ENCODE measurements at regions of chr12 and their contacts with region 1.

Region 1: DNA sequence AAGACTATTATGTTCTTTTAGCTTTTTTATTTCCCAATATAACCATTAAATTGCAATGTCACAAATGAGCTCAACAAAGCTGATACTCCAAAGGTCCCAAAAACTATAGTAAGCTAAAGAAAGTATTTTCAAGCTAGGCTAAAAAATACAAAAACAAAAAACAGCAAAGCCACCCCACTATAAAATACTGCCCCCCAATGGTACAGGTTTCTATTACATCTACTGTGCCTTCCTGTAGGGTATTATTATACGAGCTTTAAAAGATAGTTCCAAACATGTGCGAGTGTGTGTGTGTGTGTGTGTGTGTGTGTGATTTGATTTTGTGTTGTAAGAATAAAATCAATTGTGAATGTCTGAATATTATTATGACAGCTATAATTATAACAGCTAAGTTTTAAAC is 1.1 kb downstream of the IFNG start:
- DNase-seq: peak in 6 of 35 experiments; percentile 3 to 72 (median 14)
- ATAC-seq: peak in 2 of 4 experiments; percentile 43 to 47
- H3K4me3 ChIP-seq: peak overlapping the region in 1 of 2 donors; percentile 30
- H3K4me3 Mint-ChIP-seq: peak overlapping the region in 1 of 3 donors; percentile 58
- H3K27ac ChIP-seq: no peak overlapping the region
- H3K27ac Mint-ChIP-seq: no peak overlapping the region
- H3K4me1 ChIP-seq: peaks cover 0 to 4% of the 10 kb centered on the region in 2 experiments
- H3K4me1 Mint-ChIP-seq: peaks cover 10 to 40% (median 37%) of the 10 kb centered on the region in 3 donors
- H3K27me3 ChIP-seq: no peaks in the 10 kb centered on the region
- H3K27me3 Mint-ChIP-seq: no peaks in the 10 kb centered on the region

Region 2: DNA sequence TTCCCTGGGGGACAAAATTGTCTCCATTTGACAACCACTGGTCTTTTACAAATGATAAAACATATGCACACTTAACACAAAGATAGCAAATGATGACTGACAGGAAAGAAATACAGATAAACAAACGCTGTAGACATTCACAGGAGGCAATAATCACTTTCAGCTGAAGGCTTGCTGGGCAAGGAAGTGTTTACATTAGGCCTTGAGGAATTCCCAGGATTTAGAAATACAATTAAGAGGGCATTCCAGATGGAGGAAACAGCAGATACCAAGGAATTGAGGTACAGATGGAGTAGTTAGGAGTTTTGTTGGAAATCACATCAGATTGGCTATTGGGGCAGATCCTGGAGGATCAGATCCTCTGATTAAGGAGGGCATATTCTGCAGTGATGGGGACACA is 416.0 kb before region 1 on chr12:
- CTCF ChIA-PET with region 1: no interaction called
- POLR2A ChIA-PET with region 1: no interaction called
- DNase-seq: no peak
- ATAC-seq: no peak
- H3K4me3 ChIP-seq: no peak overlapping the region
- H3K4me3 Mint-ChIP-seq: no peak overlapping the region
- H3K27ac ChIP-seq: no peak overlapping the region
- H3K27ac Mint-ChIP-seq: no peak overlapping the region
- H3K4me1 ChIP-seq: no peaks in the 10 kb centered on the region
- H3K4me1 Mint-ChIP-seq: no peaks in the 10 kb centered on the region
- H3K27me3 ChIP-seq: no peaks in the 10 kb centered on the region
- H3K27me3 Mint-ChIP-seq: no peaks in the 10 kb centered on the region

Region 3: GRCh38 chr12:68040450-68041075 is 117.9 kb before region 1 on chr12:
- CTCF ChIA-PET with region 1: interaction called, 7 to 26 read pairs
- POLR2A ChIA-PET with region 1: interaction called in 1 of 2 experiments, 3 read pairs
- DNase-seq: peak in 34 of 35 experiments; percentile 8 to 85 (median 52)
- ATAC-seq: peak; percentile 66 to 85 (median 80)
- H3K4me3 ChIP-seq: no peak overlapping the region
- H3K4me3 Mint-ChIP-seq: no peak overlapping the region
- H3K27ac ChIP-seq: no peak overlapping the region
- H3K27ac Mint-ChIP-seq: no peak overlapping the region
- H3K4me1 ChIP-seq: peaks cover 0 to 10% of the 10 kb centered on the region in 2 experiments
- H3K4me1 Mint-ChIP-seq: peaks cover 6 to 17% (median 13%) of the 10 kb centered on the region in 3 donors
- H3K27me3 ChIP-seq: no peaks in the 10 kb centered on the region
- H3K27me3 Mint-ChIP-seq: no peaks in the 10 kb centered on the region

Region 4: DNA sequence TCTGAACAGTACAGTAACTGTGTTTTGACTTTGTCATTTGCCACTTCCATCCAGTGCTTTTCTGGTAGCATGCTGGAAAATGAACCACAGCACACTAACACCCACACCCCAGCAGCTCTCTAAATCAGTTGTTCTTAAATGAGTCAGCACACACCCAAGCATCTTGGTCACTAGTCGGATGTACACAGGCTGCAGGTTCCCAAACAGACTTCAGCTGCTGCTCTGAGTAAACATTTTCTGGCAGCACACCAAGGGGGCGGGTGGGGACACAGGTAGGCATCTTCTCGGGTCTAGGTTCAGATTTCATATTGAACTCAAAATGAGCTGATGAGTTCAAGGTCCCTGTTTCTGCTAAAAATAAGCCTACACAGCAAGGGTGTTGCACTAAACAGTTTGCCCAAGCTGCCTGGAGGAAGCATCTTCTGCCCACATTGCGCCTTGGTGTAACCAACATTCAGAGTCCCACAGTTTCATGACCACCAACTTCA is 38.7 kb before region 1 on chr12:
- CTCF ChIA-PET with region 1: interaction called in 1 of 2 experiments, 41 read pairs
- POLR2A ChIA-PET with region 1: no interaction called
- DNase-seq: peak in 30 of 35 experiments; percentile 5 to 56 (median 18)
- ATAC-seq: peak; percentile 49 to 79 (median 56)
- H3K4me3 ChIP-seq: no peak overlapping the region
- H3K4me3 Mint-ChIP-seq: no peak overlapping the region
- H3K27ac ChIP-seq: peak overlapping the region; percentile 55
- H3K27ac Mint-ChIP-seq: peak overlapping the region; percentile 47 to 71
- H3K4me1 ChIP-seq: peaks cover 10 to 31% of the 10 kb centered on the region in 2 experiments
- H3K4me1 Mint-ChIP-seq: peaks cover 22 to 36% (median 24%) of the 10 kb centered on the region in 3 donors
- H3K27me3 ChIP-seq: no peaks in the 10 kb centered on the region
- H3K27me3 Mint-ChIP-seq: no peaks in the 10 kb centered on the region

Region 5: GRCh38 chr12:68175557-68176061 is 17.2 kb after region 1 on chr12:
- CTCF ChIA-PET with region 1: interaction called, 4 to 19 read pairs
- POLR2A ChIA-PET with region 1: interaction called in 1 of 2 experiments, 4 read pairs
- DNase-seq: peak; percentile 40 to 89 (median 68)
- ATAC-seq: peak; percentile 89 to 93 (median 92)
- H3K4me3 ChIP-seq: peak overlapping the region in 1 of 2 donors; percentile 39
- H3K4me3 Mint-ChIP-seq: peak overlapping the region; percentile 60 to 71 (median 67)
- H3K27ac ChIP-seq: peak overlapping the region; percentile 94
- H3K27ac Mint-ChIP-seq: peak overlapping the region; percentile 89 to 91
- H3K4me1 ChIP-seq: peaks cover 37 to 43% of the 10 kb centered on the region in 2 experiments
- H3K4me1 Mint-ChIP-seq: peaks cover 65 to 67% (median 67%) of the 10 kb centered on the region in 3 donors
- H3K27me3 ChIP-seq: no peaks in the 10 kb centered on the region
- H3K27me3 Mint-ChIP-seq: no peaks in the 10 kb centered on the region

Region 6: GRCh38 chr12:68189821-68190242 is 31.4 kb after region 1 on chr12:
- CTCF ChIA-PET with region 1: interaction called, 3 read pairs
- POLR2A ChIA-PET with region 1: interaction called in 1 of 2 experiments, 13 read pairs
- DNase-seq: peak in 8 of 35 experiments; percentile 3 to 62 (median 13)
- ATAC-seq: peak; percentile 66 to 93 (median 91)
- H3K4me3 ChIP-seq: no peak overlapping the region
- H3K4me3 Mint-ChIP-seq: peak overlapping the region; percentile 14 to 40 (median 29)
- H3K27ac ChIP-seq: peak overlapping the region; percentile 33
- H3K27ac Mint-ChIP-seq: peak overlapping the region; percentile 76 to 84
- H3K4me1 ChIP-seq: peaks cover 0 to 8% of the 10 kb centered on the region in 2 experiments
- H3K4me1 Mint-ChIP-seq: peaks cover 18 to 36% (median 23%) of the 10 kb centered on the region in 3 donors
- H3K27me3 ChIP-seq: no peaks in the 10 kb centered on the region
- H3K27me3 Mint-ChIP-seq: peaks cover 0 to 3% of the 10 kb centered on the region in 2 donors

Measured in T-cell (primary cell).